Head of caudate nucleus (tissue), 42 donors: ENCODE measurements at regions of chr5 and their contacts with region 1.

Region 1: DNA sequence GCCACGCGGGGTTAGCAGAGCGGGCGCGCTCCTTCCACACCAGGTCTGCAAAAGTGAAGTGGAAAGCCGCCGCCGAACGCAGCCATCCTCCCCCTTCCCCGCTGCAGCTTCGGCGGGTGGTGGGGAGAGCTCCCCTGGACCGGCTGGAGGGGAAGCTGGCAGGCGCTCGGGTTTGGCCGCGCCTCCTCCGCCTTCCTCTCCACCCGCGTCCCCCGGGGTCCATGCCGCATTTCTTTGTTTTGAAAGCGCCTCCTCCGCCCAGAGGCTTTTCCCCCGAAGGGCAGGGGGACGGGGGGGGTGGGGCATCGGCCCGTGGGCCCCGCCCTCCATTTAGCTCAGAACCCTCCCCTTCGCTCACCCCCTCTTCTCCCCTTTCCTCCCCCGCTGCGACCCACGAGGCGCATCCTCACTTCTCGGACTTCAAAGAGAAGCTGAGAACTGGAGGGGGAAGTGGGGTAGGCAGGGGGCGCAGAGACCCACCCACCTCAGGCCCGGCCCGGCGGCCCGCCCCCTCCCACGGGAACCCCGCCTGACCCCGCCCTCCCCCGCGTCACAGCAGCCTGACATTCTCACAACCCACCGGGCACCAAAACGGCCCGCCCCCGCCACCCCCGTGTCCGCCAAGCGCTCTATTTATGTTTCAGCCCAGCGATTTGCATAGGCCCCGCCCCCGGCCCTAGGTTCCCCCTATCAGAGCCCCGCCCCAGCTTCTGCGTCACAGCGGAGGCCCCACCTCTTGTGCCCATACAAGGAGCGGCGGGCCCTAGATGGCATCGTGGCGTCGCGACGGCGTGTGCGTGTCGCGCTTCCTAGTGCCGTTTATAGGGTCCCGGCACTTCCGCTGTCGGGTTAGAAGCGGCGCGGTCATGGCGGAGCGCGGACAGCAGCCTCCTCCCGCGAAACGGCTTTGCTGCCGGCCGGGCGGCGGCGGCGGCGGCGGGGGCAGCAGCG is at the start of gene ZSWIM6:
- DNase-seq: peak; percentile 97 to 100 (median 100)

Region 2: GRCh38 chr5:61162010-61162831 is 169.5 kb before region 1 on chr5 and contains the start of gene SMIM15:
- intact Hi-C with region 1: loop called (anchors 5 kb)
- DNase-seq: peak; percentile 64 to 94 (median 86)

Region 3: DNA sequence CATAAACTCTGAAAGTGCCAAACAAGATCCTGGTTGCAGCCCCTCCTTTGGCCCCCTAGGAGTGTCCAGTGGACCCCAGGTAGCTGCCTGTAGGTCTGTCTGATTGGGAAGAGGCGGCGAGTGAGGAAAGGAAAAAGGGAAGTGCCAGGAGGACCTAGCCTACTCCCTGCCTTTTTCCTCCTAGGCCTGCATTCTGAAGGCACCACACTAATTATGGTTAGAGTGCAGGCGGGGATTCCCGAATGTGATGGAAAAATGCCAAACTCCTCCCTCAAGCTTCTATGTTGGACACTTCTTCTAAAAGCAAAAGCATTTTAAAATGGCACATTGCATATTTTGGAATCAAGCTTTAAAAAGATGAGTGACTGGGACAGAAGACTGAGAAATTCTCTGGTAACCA is 86.2 kb before region 1 on chr5:
- intact Hi-C with region 1: no loop called
- DNase-seq: peak in 2 of 42 donors; percentile 17 to 37

Region 4: DNA sequence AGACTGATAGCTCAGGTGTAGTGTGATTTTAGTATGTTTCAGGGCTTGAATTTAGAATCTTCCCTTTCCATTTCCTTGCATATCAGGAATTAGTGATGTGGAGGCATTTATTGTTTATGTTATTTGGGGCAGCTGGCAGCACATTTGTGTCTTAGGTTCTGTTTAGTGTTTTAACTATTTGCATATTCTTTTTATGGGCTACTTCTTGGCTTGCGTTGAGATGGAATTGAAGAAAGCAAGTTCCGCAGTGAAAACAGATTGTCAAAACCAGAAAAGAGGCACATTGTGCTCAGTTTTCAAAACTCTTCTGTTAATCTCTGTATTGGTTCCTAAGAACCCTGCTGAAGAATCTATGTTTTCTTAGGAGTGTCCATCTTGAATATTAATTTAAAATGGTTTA is 80.7 kb after region 1 on chr5:
- intact Hi-C with region 1: loop called (anchors 5 kb)
- DNase-seq: no peak

Region 5: GRCh38 chr5:61641747-61642578 is 310.3 kb after region 1 on chr5:
- intact Hi-C with region 1: loop called (anchors 5 kb)
- DNase-seq: no peak